Tibial artery (tissue), 4 donors: ENCODE measurements at regions of chr21 and their contacts with region 1.

Region 1: DNA sequence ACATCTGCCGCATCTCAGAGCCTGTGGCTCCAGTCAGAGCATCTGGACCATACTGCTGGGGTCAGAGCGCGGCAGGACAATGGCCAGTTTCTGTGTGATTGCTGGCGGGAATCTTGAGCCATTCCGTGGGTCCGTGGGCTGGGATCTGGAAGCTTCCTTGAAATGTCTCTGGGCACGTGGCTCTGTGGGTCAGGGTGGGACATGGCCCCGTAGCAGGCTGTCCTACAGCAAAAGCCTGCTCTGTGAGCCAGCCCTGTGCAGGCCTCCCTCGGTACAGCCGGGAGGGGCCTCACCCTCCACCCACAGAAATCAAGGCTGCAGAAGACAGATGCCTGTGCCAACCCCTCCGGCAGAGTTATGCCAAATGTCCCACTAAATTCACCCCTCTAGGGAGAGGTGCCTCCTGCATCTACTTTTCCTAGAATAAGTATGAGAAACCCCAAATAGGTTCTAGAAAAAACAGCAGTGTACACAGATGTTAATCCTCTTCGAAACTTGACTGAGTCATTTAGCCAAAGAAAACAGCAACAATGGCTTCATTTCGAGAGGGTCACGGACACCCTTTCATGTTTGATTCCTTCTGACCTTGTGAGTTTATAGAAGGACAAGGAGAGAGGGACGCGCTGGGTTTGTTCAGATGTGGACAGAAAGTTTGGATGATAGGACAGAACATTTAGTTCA is 27.8 kb downstream of the COL18A1 start:
- DNase-seq: peak in 1 of 2 donors; percentile 86
- H3K4me3 ChIP-seq: peak overlapping the region; percentile 6
- H3K27ac ChIP-seq: peak overlapping the region; percentile 77 to 98
- H3K4me1 ChIP-seq: peaks cover 0 to 91% (median 70%) of the 10 kb centered on the region in 4 donors
- H3K27me3 ChIP-seq: no peaks in the 10 kb centered on the region
- CTCF ChIP-seq: no peak

Region 2: GRCh38 chr21:45236481-45236880 is 196.2 kb before region 1 on chr21:
- intact Hi-C with region 1: no loop called
- DNase-seq: peak in 1 of 2 donors; percentile 57
- H3K4me3 ChIP-seq: no peak overlapping the region
- H3K27ac ChIP-seq: no peak overlapping the region
- H3K4me1 ChIP-seq: no peaks in the 10 kb centered on the region
- H3K27me3 ChIP-seq: peaks cover 0 to 12% of the 10 kb centered on the region in 2 donors
- CTCF ChIP-seq: no peak

Region 3: DNA sequence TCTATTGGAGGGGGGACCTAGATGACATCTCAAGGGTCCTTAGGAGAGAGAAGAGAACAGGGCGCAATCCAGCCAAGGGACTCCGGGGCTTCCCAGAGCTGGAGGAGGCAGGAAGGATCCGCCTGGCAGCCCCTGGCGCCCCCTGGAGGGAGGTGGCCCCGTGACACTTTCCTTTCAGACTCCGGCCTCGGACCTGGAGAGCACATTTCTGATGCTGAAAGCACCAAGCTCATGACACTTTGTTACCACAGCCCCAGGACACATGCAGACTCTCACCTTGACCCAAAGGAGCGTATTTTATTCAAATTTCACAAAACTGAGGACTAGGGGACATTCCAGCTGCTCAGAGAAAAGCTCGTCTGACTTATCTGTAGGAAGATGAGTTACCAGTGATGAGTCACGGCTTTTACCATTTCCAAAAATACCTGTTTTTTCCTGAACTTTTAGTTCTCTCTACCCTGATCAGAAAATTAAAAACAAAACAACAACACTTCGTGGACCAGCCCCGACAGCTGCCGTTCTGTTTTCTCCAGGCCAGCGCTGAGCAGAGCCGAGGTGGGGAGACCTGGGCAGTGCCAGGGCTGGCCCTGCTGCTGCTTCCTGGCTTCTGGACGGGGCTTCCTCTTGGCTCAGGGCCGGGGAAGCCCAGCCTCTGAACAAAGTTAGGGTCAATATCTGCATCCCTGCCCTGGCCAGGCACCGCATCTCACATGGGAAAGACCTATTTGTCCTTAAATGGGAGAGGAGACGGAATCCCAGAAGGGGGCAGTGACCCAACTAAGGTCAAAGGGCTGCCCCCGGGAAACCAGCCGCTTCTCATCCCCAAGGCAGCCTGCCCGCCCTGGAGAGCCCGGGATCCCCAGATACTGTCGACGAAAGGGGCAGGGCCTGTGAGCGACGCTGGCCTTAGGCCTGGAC is 123.4 kb before region 1 on chr21:
- intact Hi-C with region 1: loop called (anchors 5 kb)
- DNase-seq: peak in 1 of 2 donors; percentile 89
- H3K4me3 ChIP-seq: no peak overlapping the region
- H3K27ac ChIP-seq: peak overlapping the region; percentile 69 to 98
- H3K4me1 ChIP-seq: peaks cover 0 to 43% (median 33%) of the 10 kb centered on the region in 4 donors
- H3K27me3 ChIP-seq: no peaks in the 10 kb centered on the region
- CTCF ChIP-seq: peak; percentile 55 to 69

Region 4: GRCh38 chr21:45386721-45387371 is 45.9 kb before region 1 on chr21:
- intact Hi-C with region 1: loop called (anchors 5 kb)
- DNase-seq: peak; percentile 73 to 82
- H3K4me3 ChIP-seq: no peak overlapping the region
- H3K27ac ChIP-seq: peak overlapping the region; percentile 29 to 52
- H3K4me1 ChIP-seq: peaks cover 0 to 26% (median 14%) of the 10 kb centered on the region in 4 donors
- H3K27me3 ChIP-seq: no peaks in the 10 kb centered on the region
- CTCF ChIP-seq: peak; percentile 31 to 36